PC-9 (cell line): ENCODE measurements at regions of chr13 and their contacts with region 1.

Region 1: DNA sequence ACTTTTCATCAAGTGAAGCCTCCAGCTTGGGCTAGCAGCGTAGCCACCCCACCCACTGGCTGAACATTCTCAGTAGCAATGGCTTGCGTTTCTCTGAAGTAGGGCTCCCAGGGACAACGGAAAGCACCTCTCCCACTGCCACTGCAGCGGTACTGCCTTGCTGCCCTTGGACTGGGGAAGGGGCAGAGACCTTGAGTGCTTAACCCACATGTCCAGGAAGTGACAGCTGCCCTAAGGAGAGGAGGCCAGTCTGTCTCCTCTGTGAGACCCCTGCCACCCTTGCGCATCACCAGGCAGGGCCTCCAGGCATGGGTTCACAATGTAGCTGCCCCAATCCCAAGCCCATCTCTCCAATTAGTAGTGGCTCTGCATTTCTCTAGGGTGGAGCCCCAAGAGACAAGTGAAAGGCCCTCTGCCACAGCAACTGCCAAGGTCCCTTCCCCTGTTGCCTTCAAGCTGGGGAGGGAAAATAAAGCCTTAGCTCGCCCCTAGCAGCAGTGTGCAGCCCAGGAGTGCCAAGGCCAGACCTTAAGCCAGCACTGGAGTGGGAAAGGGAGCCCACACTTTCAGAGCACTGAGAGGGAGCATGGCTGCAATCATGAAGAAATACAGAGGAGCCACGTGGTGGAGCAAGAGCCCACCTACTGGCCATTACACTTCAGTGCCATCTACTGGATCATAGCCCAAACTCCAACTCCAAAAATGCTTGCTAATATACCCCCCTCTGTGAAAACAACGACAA is 175.9 kb upstream of the TRPC4 start:
- DNase-seq: peak in 1 of 2 experiments; percentile 0
- H3K4me3 ChIP-seq: no peak overlapping the region
- H3K27ac ChIP-seq: no peak overlapping the region
- H3K4me1 ChIP-seq: no peaks in the 10 kb centered on the region
- H3K27me3 ChIP-seq: no peaks in the 10 kb centered on the region
- CTCF ChIP-seq: peak; percentile 61; the same call in 1 of the 2 replicates

Region 2: DNA sequence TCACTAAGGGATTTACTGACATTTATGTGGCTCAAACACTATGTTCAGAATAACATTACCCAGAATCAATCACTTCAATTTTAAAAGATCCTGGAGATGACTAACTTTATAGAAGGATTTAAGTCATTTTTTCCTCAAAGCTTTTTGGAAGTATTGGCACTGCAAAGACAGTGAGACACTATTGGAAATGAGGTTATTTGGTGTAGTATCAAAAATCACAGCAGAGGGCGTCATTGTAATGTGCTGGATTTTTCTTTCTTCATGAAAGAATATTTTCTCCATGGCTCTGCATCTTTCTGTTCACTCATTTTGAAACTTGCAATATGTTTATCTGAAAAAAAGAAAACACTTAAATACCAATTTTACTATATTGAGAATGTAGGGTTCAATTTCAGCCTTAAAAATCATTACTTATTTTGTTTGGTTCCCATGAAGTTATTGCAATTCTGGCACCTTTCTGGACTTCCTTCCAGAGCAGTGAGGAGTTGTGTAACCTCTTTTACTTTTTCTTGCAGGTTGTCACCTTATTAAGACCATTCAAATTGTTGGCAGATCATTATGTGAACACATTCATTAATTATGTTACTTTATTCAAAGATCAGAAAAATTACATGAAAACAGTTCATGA is 936.3 kb before region 1 on chr13:
- CTCF ChIA-PET with region 1: no interaction called
- POLR2A ChIA-PET with region 1: no interaction called
- intact Hi-C with region 1: loop called (anchors 5 kb)
- DNase-seq: no peak
- H3K4me3 ChIP-seq: no peak overlapping the region
- H3K27ac ChIP-seq: no peak overlapping the region
- H3K4me1 ChIP-seq: no peaks in the 10 kb centered on the region
- H3K27me3 ChIP-seq: no peaks in the 10 kb centered on the region
- CTCF ChIP-seq: peak; percentile 70

Region 3: GRCh38 chr13:37686501-37686900 is 359.0 kb before region 1 on chr13:
- CTCF ChIA-PET with region 1: interaction called, 20 read pairs
- POLR2A ChIA-PET with region 1: no interaction called
- intact Hi-C with region 1: no loop called
- DNase-seq: no peak
- H3K4me3 ChIP-seq: no peak overlapping the region
- H3K27ac ChIP-seq: no peak overlapping the region
- H3K4me1 ChIP-seq: no peaks in the 10 kb centered on the region
- H3K27me3 ChIP-seq: no peaks in the 10 kb centered on the region
- CTCF ChIP-seq: no peak